ENCODE measurements at regions of chr14 and their contacts with region 1.

Region 1: GRCh38 chr14:52015411-52016030 is 26.2 kb downstream of the RTRAF start:
- DNase-seq: no peak
- H3K4me3 ChIP-seq: no peak overlapping the region
- H3K27me3 ChIP-seq: no peaks in the 10 kb centered on the region
- CTCF ChIP-seq: peak; percentile 53

Region 2: GRCh38 chr14:51860164-51860824 is 155.2 kb before region 1 on chr14 and contains the start of gene GNG2:
- CTCF ChIA-PET with region 1: no interaction called
- POLR2A ChIA-PET with region 1: no interaction called
- DNase-seq: no peak
- H3K4me3 ChIP-seq: peak within 1 kb of the TSS; percentile 40
- H3K27me3 ChIP-seq: no peaks in the 10 kb centered on the region
- CTCF ChIP-seq: no peak
- polyA plus RNA-seq, gene GNG2: 4.5 and 7.6 TPM in 2 replicates

Region 3: GRCh38 chr14:51996148-51996746 is 19.3 kb before region 1 on chr14:
- CTCF ChIA-PET with region 1: interaction called, 12 read pairs
- POLR2A ChIA-PET with region 1: no interaction called
- DNase-seq: no peak
- H3K4me3 ChIP-seq: no peak overlapping the region
- H3K27me3 ChIP-seq: no peaks in the 10 kb centered on the region
- CTCF ChIP-seq: peak; percentile 66

Region 4: DNA sequence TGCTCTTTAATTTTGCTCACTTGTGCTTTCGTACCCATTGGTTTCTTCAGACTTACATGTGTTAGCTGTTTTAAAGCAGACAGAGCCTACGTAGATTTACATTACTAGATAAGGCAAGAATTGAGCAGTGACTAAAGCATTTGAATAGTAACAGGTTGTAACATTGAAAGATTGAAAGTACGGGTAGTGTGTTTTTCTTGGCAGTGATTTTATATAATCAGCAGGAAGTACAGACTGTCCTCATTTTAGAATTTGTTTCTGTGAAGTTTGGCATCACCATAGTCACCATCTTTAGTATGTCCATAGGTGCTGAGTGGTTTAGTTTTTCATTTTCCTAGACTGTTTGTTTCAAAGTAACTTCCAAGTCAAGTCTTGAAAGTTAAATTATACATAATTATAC is 12.2 kb before region 1 on chr14:
- CTCF ChIA-PET with region 1: interaction called, 10 read pairs
- POLR2A ChIA-PET with region 1: no interaction called
- DNase-seq: no peak
- H3K4me3 ChIP-seq: no peak overlapping the region
- H3K27me3 ChIP-seq: no peaks in the 10 kb centered on the region
- CTCF ChIP-seq: no peak